ENCODE measurements at regions of chr9 and their contacts with region 1.

Region 1: GRCh38 chr9:132381966-132382541 is 24.6 kb downstream of the TTF1 start:
- DNase-seq: no peak
- H3K4me3 ChIP-seq: no peak overlapping the region
- H3K27ac ChIP-seq: peak overlapping the region; percentile 27
- H3K4me1 ChIP-seq: no peaks in the 10 kb centered on the region
- H3K27me3 ChIP-seq: no peaks in the 10 kb centered on the region
- CTCF ChIP-seq: no peak

Region 2: GRCh38 chr9:132274861-132275260 is 107.2 kb before region 1 on chr9:
- intact Hi-C with region 1: loop called (anchors 10 kb)
- DNase-seq: no peak
- H3K4me3 ChIP-seq: no peak overlapping the region
- H3K27ac ChIP-seq: no peak overlapping the region
- H3K4me1 ChIP-seq: no peaks in the 10 kb centered on the region
- H3K27me3 ChIP-seq: no peaks in the 10 kb centered on the region
- CTCF ChIP-seq: no peak

Region 3: DNA sequence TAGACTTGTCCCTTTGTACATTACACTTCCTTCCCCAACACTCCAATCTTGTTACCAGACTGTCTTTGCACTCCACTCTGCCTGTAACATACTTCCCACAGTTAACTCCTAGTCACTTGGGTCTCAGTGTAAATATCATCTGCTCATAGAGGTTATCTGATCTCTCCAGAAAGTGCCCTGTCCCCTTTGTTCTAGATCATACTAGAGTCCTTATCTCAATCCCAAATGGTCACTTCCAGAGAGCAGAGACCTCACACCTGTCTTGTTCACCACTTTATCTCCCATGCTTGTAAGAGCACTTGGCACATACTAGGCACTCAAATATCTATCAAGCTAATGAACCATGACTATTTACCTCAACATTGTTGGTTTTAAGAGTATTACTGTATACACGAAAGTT is 57.6 kb before region 1 on chr9:
- intact Hi-C with region 1: no loop called
- DNase-seq: no peak
- H3K4me3 ChIP-seq: no peak overlapping the region
- H3K27ac ChIP-seq: no peak overlapping the region
- H3K4me1 ChIP-seq: no peaks in the 10 kb centered on the region
- H3K27me3 ChIP-seq: no peaks in the 10 kb centered on the region
- CTCF ChIP-seq: no peak

Measured in colonic mucosa (tissue), 4 donors.